ENCODE measurements at regions of chr21 and their contacts with region 1.

Region 1: GRCh38 chr21:34836103-34836932 is 167.5 kb downstream of the CLIC6 start:
- DNase-seq: peak; percentile 99
- H3K4me3 ChIP-seq: peak overlapping the region; percentile 20
- H3K27ac ChIP-seq: peak overlapping the region; percentile 94
- H3K27me3 ChIP-seq: no peaks in the 10 kb centered on the region
- CTCF ChIP-seq: no peak

Region 2: DNA sequence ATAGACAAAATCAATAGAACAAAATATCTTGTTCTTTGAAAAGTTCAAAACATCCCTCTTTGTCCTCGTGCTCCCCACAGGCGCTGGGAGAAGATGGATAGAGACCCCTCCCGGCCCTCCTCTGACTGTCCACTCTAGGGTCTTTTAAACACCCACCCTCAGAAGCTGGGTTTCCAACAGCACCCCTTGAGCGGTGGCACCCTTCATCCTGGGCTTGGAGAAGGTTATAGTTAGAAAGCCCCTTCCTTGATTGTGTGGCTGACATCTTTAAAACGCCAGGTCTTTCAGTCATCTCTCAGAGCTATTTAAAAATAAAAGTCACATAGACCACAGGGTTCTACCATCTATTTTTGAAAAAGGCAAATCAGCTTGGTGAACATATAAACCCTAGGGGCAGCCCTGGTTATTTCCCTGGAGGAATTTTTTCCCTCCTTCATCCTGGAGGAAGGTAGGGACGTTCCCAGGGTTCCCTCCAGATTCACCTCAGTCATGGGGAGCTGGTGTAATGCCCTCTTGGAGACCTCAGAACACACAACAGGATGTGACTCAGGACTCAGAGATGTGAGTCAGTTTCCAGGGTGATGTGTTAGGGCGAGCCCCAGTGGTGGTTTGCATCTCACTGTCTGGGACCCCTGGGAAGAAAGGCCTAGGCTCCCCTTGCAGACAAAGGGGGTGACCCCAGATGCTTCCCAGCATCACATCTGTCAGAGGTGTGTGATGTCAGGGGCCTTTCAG is 29.0 kb before region 1 on chr21:
- CTCF ChIA-PET with region 1: no interaction called
- POLR2A ChIA-PET with region 1: interaction called, 11 read pairs
- DNase-seq: peak; percentile 81
- H3K4me3 ChIP-seq: no peak overlapping the region
- H3K27ac ChIP-seq: peak overlapping the region; percentile 100
- H3K27me3 ChIP-seq: no peaks in the 10 kb centered on the region
- CTCF ChIP-seq: no peak

Region 3: GRCh38 chr21:34865928-34866284 is 29.6 kb after region 1 on chr21:
- CTCF ChIA-PET with region 1: no interaction called
- POLR2A ChIA-PET with region 1: no interaction called
- DNase-seq: no peak
- H3K4me3 ChIP-seq: no peak overlapping the region
- H3K27ac ChIP-seq: no peak overlapping the region
- H3K27me3 ChIP-seq: no peaks in the 10 kb centered on the region
- CTCF ChIP-seq: no peak

Region 4: DNA sequence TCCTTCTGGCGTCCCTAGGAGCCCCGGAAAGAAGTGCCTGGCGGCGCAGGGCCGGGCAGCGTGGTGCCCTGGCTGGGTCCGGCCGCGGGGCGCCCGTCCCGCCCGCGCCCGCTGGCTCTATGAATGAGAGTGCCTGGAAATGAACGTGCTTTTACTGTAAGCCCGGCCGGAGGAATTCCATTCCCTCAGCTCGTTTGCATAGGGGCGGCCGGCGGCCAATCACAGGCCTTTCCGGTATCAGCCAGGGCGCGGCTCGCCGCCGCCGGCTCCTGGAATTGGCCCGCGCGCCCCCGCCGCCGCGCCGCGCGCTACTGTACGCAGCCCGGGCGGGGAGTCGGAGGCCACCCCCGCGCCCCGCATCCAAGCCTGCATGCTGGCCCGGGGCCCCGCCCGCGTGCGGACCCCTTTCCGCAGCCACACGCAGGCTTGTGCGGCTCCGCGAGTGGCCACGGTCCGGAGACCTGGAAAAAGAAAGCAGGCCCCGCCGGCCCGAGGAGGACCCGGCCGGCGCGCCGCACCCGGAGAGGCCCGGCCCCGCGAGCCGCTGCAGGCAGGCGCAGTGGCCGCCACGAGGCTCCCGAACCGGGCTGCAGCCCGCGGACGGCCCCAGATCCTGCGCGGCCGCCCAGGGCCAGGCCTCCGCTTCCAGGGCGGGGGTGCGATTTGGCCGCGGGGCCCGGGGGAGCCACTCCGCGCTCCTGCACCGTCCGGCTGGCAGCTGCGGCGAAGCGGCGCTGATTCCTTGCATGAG is 52.4 kb after region 1 on chr21:
- CTCF ChIA-PET with region 1: no interaction called
- POLR2A ChIA-PET with region 1: interaction called, 10 read pairs
- DNase-seq: peak; percentile 92
- H3K4me3 ChIP-seq: peak overlapping the region; percentile 92
- H3K27ac ChIP-seq: peak overlapping the region; percentile 99
- H3K27me3 ChIP-seq: no peaks in the 10 kb centered on the region
- CTCF ChIP-seq: no peak

Region 5: DNA sequence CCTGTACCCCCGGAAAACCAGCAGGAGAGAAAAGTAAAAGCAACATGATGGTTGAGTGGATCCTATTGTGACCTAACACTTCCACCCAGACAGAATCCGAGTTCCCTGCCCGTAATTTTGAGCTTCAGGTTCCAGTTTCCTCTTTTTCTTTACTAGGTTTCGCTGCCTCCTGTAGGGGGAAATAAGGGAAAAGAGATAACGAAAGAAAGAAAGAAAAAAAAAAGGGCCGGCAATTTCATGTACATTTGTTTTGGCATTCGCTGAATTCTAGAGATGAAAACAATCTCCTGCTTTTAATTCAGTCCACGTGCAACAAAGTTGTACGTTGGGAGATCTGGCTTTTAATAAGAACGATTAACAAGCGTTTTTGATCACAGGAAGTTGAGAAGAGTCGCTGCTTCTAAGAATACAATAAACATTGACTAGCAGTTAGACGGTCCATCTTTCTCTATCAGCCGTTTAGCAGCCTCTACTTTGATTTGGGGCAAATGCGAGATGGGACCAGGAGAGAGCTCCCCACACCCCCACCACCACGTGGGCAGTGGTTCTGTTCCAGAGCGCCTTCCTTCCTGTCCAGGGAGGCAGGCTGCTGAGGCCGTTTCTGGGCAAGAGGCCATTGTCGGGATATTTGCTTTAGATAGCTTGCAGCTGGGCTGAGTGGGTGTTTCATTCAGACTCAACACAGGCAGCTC is 368.7 kb after region 1 on chr21:
- CTCF ChIA-PET with region 1: no interaction called
- POLR2A ChIA-PET with region 1: no interaction called
- DNase-seq: peak; percentile 93
- H3K4me3 ChIP-seq: peak overlapping the region; percentile 14
- H3K27ac ChIP-seq: peak overlapping the region; percentile 91
- H3K27me3 ChIP-seq: no peaks in the 10 kb centered on the region
- CTCF ChIP-seq: peak; percentile 41

Measured in AG04450 (cell line).